PC-9 (cell line): ENCODE measurements at regions of chr12 and their contacts with region 1.

Region 1: DNA sequence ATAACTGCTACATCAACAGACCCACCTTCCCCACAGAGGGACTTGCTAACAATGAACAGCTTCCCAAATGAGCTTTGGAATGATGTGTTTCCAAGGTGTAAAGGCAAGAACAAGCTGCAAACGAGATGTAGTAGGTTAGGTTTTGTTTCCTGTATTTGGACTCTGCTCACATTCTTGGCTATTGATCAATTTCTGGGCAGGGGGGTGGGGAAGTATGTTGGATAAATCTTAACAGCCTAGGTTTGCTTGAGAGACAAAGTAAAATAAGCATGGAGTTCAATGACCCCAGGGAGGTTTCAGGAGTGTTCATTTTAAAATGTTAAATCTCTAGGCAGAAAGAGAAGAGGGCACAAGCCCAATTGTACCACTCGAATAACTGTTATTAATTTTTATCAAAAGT is 146.6 kb downstream of the DPY19L2 start:
- DNase-seq: no peak
- H3K4me3 ChIP-seq: no peak overlapping the region
- H3K27ac ChIP-seq: no peak overlapping the region
- H3K4me1 ChIP-seq: no peaks in the 10 kb centered on the region
- H3K27me3 ChIP-seq: no peaks in the 10 kb centered on the region
- CTCF ChIP-seq: no peak

Region 2: GRCh38 chr12:63495974-63496373 is 25.7 kb before region 1 on chr12:
- CTCF ChIA-PET with region 1: no interaction called
- POLR2A ChIA-PET with region 1: no interaction called
- intact Hi-C with region 1: no loop called
- DNase-seq: no peak
- H3K4me3 ChIP-seq: no peak overlapping the region
- H3K27ac ChIP-seq: no peak overlapping the region
- H3K4me1 ChIP-seq: no peaks in the 10 kb centered on the region
- H3K27me3 ChIP-seq: no peaks in the 10 kb centered on the region
- CTCF ChIP-seq: no peak

Region 3: DNA sequence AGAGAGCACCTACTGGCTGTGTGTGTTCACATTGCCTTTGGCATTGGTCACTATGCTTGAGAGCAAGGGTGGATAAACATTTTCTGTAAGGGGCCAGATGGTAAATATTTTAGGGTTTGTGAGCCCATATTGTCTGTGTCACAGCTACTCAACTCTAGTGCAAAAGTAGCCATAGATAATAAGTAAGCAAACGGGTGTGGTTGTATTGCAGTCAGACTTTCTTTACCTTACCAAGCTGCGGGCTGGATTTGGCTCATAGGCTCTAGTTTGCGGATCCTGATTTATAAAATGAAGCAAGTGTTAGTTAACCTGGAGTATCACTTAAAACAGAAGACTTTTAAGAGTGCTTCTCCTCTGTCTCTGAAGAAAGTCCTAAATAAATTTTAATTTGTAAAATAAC is 531.4 kb after region 1 on chr12:
- CTCF ChIA-PET with region 1: no interaction called
- POLR2A ChIA-PET with region 1: interaction called, 12 read pairs
- intact Hi-C with region 1: no loop called
- DNase-seq: no peak
- H3K4me3 ChIP-seq: no peak overlapping the region
- H3K27ac ChIP-seq: no peak overlapping the region
- H3K4me1 ChIP-seq: no peaks in the 10 kb centered on the region
- H3K27me3 ChIP-seq: no peaks in the 10 kb centered on the region
- CTCF ChIP-seq: no peak